Activated CD8-positive, alpha-beta memory T cell treated with anti-CD3 and anti-CD28 coated beads, Interleukin-2, amount 10 ng/mL, durations not matched to agents 7 days and 5 days (primary cell): ENCODE measurements at regions of chr15 and their contacts with region 1.

Region 1: DNA sequence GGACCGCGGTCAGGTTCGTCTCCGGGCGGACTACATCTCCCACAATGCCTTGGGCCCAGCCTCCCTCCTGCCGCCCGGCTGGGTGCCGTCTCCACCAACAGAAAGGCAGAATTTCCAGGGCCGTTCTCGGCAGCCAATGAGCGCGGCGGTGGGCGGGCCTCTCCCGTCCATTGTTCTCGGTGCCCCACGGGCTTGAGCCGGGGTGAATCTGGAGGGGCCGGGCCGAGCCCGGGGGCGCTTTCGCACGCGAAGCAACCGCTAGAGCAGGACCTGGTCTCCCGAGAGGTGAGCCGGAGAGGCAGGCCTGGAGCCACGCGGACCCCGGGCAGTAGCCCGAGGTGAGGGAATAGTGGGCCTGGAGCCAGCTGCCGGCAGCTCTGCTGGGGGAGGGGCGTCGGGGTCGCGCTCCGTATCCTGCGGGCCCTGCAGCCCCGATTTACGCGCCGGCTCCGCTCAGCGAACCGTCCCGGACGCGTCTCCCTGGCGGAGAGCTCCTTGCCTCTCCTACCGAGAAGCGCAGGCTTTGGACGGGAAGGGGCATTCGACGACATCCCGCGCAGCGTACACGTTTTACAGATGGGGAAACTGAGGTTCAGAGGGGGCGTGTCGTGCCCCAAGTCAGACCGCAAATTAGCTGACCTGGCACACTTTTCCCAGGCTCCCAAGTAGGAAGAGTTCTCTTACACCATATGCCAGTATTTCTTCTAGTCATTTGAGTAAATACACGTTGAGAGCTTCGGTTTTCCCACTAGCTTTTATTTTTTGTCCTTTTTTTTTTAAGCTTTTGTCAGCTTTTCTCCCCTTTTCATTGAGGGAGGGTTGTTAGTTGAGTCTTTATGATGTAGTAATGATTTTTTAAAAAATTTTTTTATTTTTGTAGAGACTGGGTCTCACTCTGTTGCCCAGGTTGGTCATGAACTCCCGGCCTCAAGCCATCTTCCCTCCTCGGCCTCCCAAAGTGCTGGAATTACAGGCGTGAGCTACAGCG is at the start of gene ZSCAN2:
- DNase-seq: peak; percentile 98
- ATAC-seq: peak; percentile 96
- H3K4me3 Mint-ChIP-seq: peak within 1 kb of the TSS; percentile 92
- H3K27ac Mint-ChIP-seq: peak within 1 kb of the TSS; percentile 72
- H3K4me1 Mint-ChIP-seq: peaks cover 76% of the 10 kb centered on the region
- H3K27me3 Mint-ChIP-seq: no peaks in the 10 kb centered on the region
- total RNA-seq, gene ZSCAN2: 8.6 to 12.9 TPM

Region 2: GRCh38 chr15:84570164-84570735 is 30.9 kb before region 1 on chr15:
- CTCF ChIA-PET with region 1: interaction called, 24 read pairs
- DNase-seq: peak; percentile 75
- ATAC-seq: peak; percentile 70
- H3K4me3 Mint-ChIP-seq: peak overlapping the region; percentile 79
- H3K27ac Mint-ChIP-seq: peak overlapping the region; percentile 85
- H3K4me1 Mint-ChIP-seq: peaks cover 20% of the 10 kb centered on the region
- H3K27me3 Mint-ChIP-seq: peaks cover 5% of the 10 kb centered on the region

Region 3: DNA sequence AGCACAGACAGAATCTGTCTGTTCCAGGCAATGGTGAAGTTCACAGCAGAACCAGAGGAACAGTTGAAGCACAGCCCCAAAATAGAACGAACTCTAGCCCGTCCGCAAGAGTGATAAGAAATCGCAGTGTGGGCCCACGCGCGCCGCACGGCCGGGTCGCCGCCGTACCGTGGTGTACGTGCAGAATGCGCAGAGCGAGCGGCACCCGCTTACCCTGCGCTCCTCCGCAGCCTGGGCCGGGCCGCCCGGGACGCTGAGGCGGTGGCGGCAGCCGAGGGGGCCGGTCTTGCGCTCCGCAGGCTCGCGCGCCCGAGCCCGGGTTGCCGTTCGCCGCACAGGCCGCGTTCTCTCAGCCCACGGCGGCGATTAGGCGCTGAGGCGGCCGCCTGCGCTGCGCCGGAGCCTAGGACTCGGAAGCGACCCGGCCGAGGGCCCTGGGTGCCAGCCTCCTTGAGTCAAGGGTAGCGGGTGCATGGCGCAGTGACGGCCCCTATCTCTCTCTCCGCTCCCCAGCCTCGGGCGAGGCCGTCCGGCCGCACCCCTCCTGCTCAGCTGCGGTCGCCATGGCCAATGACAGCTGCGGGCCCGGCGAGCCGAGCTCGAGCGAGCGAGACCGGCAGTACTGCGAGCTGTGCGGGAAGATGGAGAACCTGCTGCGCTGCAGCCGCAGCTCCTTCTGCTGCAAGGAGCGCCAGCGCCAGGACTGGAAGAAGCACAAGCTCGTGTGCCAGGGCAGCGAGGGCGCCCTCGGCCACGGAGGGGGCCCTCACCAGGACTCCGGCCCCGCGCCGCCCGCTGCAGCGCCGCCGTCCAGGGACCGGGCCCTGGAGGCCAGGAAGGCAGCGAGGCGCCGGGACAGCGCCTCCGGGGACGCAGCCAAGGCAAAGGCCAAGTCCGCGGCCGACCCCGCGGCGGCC is 32.4 kb after region 1 on chr15:
- CTCF ChIA-PET with region 1: interaction called, 48 read pairs
- DNase-seq: peak; percentile 78
- ATAC-seq: peak; percentile 54
- H3K4me3 Mint-ChIP-seq: peak overlapping the region; percentile 93
- H3K27ac Mint-ChIP-seq: peak overlapping the region; percentile 97
- H3K4me1 Mint-ChIP-seq: peaks cover 50% of the 10 kb centered on the region
- H3K27me3 Mint-ChIP-seq: no peaks in the 10 kb centered on the region

Region 4: DNA sequence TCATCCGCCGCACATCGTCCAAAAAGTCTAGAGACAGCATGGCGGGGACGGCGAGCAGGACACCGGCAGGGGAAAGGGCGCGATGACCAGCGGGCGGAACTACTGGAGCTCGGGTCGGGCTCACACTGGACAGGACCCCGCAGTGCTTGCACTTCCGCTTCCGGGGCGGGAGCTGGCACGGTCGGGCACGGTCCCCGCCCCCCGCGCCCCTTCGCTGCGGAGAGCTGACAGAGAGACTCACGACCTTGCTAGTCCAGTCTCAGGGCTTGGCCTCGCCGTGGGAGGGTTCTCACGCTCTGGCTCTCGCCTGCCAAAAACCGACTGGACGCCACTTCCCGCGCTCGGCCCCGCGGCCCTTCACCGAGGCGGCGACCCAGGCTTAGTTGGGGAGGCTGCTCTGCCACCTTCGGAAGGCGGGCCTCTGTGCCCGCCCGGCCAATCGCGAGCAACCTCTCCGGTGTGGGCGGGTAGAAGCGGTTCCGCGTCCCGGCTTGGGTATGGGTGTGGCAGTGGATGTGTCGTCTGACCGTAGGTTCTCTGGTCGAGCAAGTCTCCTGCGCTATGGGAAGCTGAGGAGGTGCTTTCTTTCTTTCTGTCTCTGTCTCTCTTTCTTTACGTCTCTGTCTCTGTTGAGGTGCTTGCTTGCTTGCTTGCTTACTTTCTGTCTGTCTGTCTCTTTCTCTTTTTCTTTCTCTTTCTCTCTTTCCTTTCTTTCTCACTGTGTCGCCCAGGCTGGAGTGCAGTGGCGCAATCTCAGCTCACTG is 115.1 kb after region 1 on chr15 and contains the start of gene SEC11A:
- CTCF ChIA-PET with region 1: interaction called, 12 read pairs
- DNase-seq: peak; percentile 96
- ATAC-seq: peak; percentile 97
- H3K4me3 Mint-ChIP-seq: peak within 1 kb of the TSS; percentile 92
- H3K27ac Mint-ChIP-seq: peak within 1 kb of the TSS; percentile 94
- H3K4me1 Mint-ChIP-seq: peaks cover 50% of the 10 kb centered on the region
- H3K27me3 Mint-ChIP-seq: no peaks in the 10 kb centered on the region
- total RNA-seq, gene SEC11A: 96.6 to 122 TPM

Region 5: GRCh38 chr15:84929744-84930371 is 328.7 kb after region 1 on chr15:
- CTCF ChIA-PET with region 1: interaction called, 18 read pairs
- DNase-seq: no peak
- ATAC-seq: peak; percentile 14
- H3K4me3 Mint-ChIP-seq: no peak overlapping the region
- H3K27ac Mint-ChIP-seq: no peak overlapping the region
- H3K4me1 Mint-ChIP-seq: peaks cover 6% of the 10 kb centered on the region
- H3K27me3 Mint-ChIP-seq: no peaks in the 10 kb centered on the region